ENCODE measurements at regions of chr1 and their contacts with region 1.

Region 1: GRCh38 chr1:119613769-119614720 is 34.0 kb downstream of the ZNF697 start:
- DNase-seq: peak; percentile 83 to 93 (median 87)
- H3K4me3 ChIP-seq: no peak overlapping the region
- H3K27ac ChIP-seq: no peak overlapping the region
- H3K4me1 ChIP-seq: peaks cover 0 to 6% (median 2%) of the 10 kb centered on the region in 4 experiments
- H3K27me3 ChIP-seq: no peaks in the 10 kb centered on the region

Region 2: GRCh38 chr1:119631433-119632102 is 17.5 kb after region 1 on chr1:
- CTCF ChIA-PET with region 1: interaction called, 11 read pairs
- POLR2A ChIA-PET with region 1: interaction called, 4 read pairs
- DNase-seq: peak; percentile 59 to 79 (median 70)
- H3K4me3 ChIP-seq: peak overlapping the region in 5 of 7 experiments; percentile 15 to 66 (median 50)
- H3K27ac ChIP-seq: no peak overlapping the region
- H3K4me1 ChIP-seq: peaks cover 0 to 23% (median 21%) of the 10 kb centered on the region in 4 experiments
- H3K27me3 ChIP-seq: no peaks in the 10 kb centered on the region

Region 3: GRCh38 chr1:119647734-119648619 is 33.9 kb after region 1 on chr1 and contains the start of gene ZNF697:
- CTCF ChIA-PET with region 1: interaction called, 72 read pairs
- POLR2A ChIA-PET with region 1: no interaction called
- DNase-seq: peak; percentile 71 to 83 (median 72)
- H3K4me3 ChIP-seq: peak within 1 kb of the TSS; percentile 64 to 88 (median 79)
- H3K27ac ChIP-seq: peak within 1 kb of the TSS in 1 of 2 experiments; percentile 29
- H3K4me1 ChIP-seq: peaks cover 6 to 28% (median 20%) of the 10 kb centered on the region in 4 experiments
- H3K27me3 ChIP-seq: peaks cover 6 to 22% (median 10%) of the 10 kb centered on the region in 5 experiments

Region 4: DNA sequence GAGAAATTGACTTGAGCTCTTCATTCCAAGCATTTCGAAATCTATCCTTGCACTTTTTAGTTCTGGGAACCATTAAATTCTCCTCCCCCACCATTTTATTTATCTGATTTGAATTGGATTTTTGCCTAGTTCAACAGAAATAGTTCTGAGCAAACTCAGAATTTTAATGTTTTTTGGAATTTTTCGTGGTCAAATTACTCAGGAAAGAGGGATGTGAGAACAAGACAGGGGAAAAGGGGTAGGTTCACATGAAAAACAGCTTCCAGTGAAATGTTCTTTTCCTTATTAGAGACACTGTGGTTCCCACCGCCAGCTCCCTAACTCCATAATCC is 39.8 kb after region 1 on chr1:
- CTCF ChIA-PET with region 1: interaction called, 328 read pairs
- POLR2A ChIA-PET with region 1: no interaction called
- DNase-seq: no peak
- H3K4me3 ChIP-seq: no peak overlapping the region
- H3K27ac ChIP-seq: no peak overlapping the region
- H3K4me1 ChIP-seq: peaks cover 0 to 2% (median 2%) of the 10 kb centered on the region in 4 experiments
- H3K27me3 ChIP-seq: peaks cover 9 to 25% (median 16%) of the 10 kb centered on the region in 5 experiments

Region 5: GRCh38 chr1:119662034-119662437 is 48.0 kb after region 1 on chr1:
- CTCF ChIA-PET with region 1: interaction called, 328 read pairs
- POLR2A ChIA-PET with region 1: no interaction called
- DNase-seq: no peak
- H3K4me3 ChIP-seq: no peak overlapping the region
- H3K27ac ChIP-seq: no peak overlapping the region
- H3K4me1 ChIP-seq: no peaks in the 10 kb centered on the region
- H3K27me3 ChIP-seq: no peaks in the 10 kb centered on the region

Region 6: DNA sequence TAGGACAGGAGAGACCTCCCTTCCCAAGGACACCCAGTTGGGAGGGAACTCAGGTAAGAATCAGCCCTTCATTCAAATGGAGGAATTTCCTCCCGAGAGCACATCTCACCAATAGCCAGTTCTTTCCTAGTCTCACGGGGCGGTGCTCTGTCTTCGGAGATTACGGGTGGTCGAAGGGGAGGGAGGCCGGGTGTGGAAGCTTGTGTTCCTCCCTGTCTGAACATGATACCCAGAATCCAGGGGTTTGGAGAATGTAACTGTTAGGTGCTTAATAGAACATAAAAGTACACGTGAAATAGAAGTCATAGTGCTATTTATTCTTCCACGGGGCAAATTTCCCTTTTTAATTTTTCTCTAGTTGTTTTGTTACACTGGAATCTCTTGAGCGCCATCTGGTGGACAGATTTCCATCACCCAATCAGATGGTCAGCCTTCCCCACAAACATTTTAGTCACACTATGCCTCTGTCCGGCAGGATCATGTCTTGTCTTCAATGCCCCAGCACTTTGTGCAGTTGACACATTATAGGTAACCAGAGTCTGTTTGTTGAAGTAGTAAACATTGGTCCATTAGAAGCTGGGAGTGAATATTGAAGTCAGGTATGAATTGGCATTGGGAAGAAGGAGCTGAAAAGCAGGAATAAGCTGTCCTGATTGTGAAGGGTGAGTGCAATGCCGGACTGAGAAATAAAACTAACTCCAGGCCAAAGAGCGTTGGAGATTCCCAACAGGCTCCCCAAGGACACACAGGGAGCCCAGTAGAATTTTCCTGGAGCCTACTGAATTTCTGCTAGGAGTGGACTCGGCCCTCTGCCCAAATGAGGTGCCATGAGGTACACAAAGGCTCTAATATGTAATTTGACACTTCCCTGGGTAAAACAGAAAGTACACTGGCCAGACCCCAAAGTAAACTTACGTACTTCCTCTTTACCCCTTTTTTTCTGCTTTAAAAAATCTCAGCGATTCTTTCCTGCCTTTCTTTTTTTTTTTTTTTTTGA is 61.6 kb after region 1 on chr1:
- CTCF ChIA-PET with region 1: interaction called, 177 read pairs
- POLR2A ChIA-PET with region 1: interaction called, 3 read pairs
- DNase-seq: peak; percentile 81 to 91 (median 86)
- H3K4me3 ChIP-seq: peak overlapping the region; percentile 8 to 86 (median 65)
- H3K27ac ChIP-seq: peak overlapping the region in 1 of 2 experiments; percentile 7
- H3K4me1 ChIP-seq: peaks cover 0 to 15% (median 4%) of the 10 kb centered on the region in 4 experiments
- H3K27me3 ChIP-seq: no peaks in the 10 kb centered on the region

Measured in common myeloid progenitor, CD34-positive (primary cell).